ENCODE measurements at regions of chr5 and their contacts with region 1.

Region 1: GRCh38 chr5:154072414-154073171 is 33.8 kb downstream of the MFAP3 start:
- DNase-seq: peak; percentile 90
- H3K4me3 Mint-ChIP-seq: no peak overlapping the region
- H3K27ac Mint-ChIP-seq: peak overlapping the region; percentile 27
- H3K4me1 Mint-ChIP-seq: peaks cover 56% of the 10 kb centered on the region
- H3K27me3 Mint-ChIP-seq: no peaks in the 10 kb centered on the region

Region 2: DNA sequence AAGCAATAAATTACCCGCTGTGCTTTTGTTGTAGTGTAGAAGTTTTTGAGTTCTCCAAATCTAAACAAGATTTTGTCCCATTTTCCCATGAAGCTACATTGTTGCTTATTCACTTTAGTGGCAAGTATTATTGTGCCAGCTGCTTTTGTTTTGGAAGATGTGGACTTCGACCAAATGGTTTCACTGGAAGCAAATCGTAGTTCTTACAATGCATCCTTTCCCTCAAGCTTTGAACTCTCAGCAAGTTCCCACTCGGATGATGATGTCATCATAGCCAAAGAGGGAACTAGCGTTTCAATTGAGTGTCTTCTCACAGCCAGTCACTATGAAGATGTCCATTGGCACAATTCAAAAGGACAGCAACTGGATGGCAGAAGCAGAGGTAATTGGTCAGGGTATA is 23.0 kb before region 1 on chr5:
- CTCF ChIA-PET with region 1: interaction called, 23 read pairs
- POLR2A ChIA-PET with region 1: interaction called, 3 read pairs
- DNase-seq: no peak
- H3K4me3 Mint-ChIP-seq: no peak overlapping the region
- H3K27ac Mint-ChIP-seq: no peak overlapping the region
- H3K4me1 Mint-ChIP-seq: peaks cover 39% of the 10 kb centered on the region
- H3K27me3 Mint-ChIP-seq: no peaks in the 10 kb centered on the region

Region 3: GRCh38 chr5:154097031-154097430 is 24.4 kb after region 1 on chr5:
- CTCF ChIA-PET with region 1: interaction called, 11 read pairs
- POLR2A ChIA-PET with region 1: no interaction called
- DNase-seq: no peak
- H3K4me3 Mint-ChIP-seq: no peak overlapping the region
- H3K27ac Mint-ChIP-seq: no peak overlapping the region
- H3K4me1 Mint-ChIP-seq: no peaks in the 10 kb centered on the region
- H3K27me3 Mint-ChIP-seq: peaks cover 22% of the 10 kb centered on the region

Region 4: GRCh38 chr5:154129921-154130320 is 57.3 kb after region 1 on chr5:
- CTCF ChIA-PET with region 1: no interaction called
- POLR2A ChIA-PET with region 1: no interaction called
- DNase-seq: no peak
- H3K4me3 Mint-ChIP-seq: no peak overlapping the region
- H3K27ac Mint-ChIP-seq: no peak overlapping the region
- H3K4me1 Mint-ChIP-seq: no peaks in the 10 kb centered on the region
- H3K27me3 Mint-ChIP-seq: peaks cover 40% of the 10 kb centered on the region

Region 5: DNA sequence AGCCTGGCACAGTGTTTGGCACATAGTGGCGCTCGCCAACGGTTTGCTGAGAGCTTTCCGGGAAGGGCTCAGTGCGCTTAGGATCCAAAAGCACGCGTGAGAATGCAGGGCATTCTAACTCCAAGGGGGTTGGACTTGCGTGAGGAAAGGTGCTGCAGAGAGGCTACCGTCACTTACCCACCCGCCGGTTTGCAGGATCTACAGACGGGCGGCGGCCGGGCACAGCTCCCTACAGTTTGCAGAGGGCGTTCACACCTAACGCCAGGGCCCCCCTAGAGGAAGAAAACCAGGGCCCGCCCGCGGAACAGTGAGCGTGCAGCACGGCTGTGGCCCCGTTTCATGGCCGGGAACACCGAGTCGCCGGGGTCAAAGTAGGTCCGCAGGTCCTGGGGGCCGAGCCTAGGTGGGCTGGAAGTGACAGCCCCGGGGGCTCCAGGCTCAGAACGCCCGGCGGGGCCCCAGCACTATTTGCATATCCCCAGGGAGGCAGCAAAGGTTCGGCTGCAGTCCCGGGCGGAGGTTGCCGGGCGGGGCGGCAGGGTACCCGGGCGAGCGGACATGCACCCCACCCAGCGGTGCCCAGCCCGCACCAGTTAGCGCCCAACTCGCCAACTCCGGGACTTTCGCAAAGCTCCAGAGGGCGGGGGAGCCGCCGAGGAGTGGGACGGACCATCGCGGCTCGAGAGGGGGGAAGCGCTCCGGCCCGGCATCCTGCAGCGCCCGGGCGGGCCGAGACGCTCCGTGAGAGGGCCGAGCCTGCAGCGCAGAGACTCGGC is 117.4 kb after region 1 on chr5:
- CTCF ChIA-PET with region 1: interaction called, 190 read pairs
- POLR2A ChIA-PET with region 1: interaction called, 36 read pairs
- DNase-seq: peak; percentile 85
- H3K4me3 Mint-ChIP-seq: peak overlapping the region; percentile 80
- H3K27ac Mint-ChIP-seq: peak overlapping the region; percentile 75
- H3K4me1 Mint-ChIP-seq: peaks cover 35% of the 10 kb centered on the region
- H3K27me3 Mint-ChIP-seq: peaks cover 4% of the 10 kb centered on the region

Region 6: GRCh38 chr5:154273028-154273617 is 200.5 kb after region 1 on chr5:
- CTCF ChIA-PET with region 1: interaction called, 13 read pairs
- POLR2A ChIA-PET with region 1: no interaction called
- DNase-seq: peak; percentile 66
- H3K4me3 Mint-ChIP-seq: peak overlapping the region; percentile 11
- H3K27ac Mint-ChIP-seq: peak overlapping the region; percentile 90
- H3K4me1 Mint-ChIP-seq: peaks cover 54% of the 10 kb centered on the region
- H3K27me3 Mint-ChIP-seq: no peaks in the 10 kb centered on the region

Measured in activated CD4-positive, alpha-beta memory T cell treated with anti-CD3 and anti-CD28 coated beads, Interleukin-2, amount 10 ng/mL, durations not matched to agents 7 days and 5 days (primary cell).